Sciatic nerve (tissue), 2 donors: ENCODE measurements at regions of chr3 and their contacts with region 1.

Region 1: GRCh38 chr3:184379358-184380188 is at the start of gene CHRD:
- DNase-seq: peak; percentile 76
- ATAC-seq: peak; percentile 83
- total RNA-seq, gene CHRD: 27.0 TPM

Region 2: DNA sequence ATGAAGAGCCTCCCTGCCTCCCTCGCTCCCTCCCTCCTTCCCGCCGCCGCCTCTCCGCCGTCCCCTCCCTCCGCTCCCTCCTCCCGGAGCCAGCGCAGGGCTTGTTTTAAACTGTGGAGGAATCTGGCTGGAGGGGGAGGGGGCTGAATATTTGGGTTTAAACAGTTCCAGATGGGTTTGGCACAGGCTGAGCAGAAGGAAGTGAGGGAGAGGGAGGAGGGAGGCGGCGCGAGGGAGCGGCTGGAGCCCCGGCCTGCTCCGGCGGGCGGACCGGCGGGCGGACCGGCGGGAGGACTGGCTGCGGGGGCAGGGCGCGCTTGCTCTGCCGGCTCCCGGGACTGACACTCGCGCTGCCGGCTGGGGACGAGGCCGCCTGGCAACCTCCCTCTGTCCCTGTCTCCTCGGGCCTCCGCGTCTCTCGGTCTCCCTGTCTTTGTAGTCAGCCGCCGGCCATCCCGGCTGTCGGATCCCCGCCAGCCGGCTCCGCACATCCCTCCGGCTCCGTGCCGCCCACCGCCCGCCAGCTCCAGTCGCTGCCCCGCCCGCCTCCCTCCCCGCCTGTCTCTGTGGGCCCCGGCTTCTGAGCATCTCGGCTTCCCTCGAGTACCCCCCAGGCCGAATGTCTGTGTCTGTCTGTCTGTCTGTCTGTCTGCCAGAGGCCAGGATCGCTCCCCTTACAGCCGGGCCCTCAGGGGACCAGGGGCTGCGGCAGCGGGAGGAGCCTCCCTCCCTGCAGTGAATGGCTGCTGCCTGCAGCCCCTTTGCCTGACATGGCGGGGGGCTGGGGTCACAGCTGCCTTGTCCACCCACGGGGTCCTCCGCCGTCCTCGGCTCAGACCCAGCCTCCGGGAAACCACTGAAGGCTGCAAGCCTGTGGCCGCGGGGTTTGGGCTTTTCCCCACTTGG is 189.6 kb after region 1 on chr3:
- intact Hi-C with region 1: no loop called
- DNase-seq: peak; percentile 92
- ATAC-seq: peak; percentile 90

Region 3: GRCh38 chr3:184777336-184778004 is 397.9 kb after region 1 on chr3:
- intact Hi-C with region 1: loop called (anchors 5 kb)
- DNase-seq: peak; percentile 96
- ATAC-seq: peak; percentile 93